ENCODE measurements at regions of chr9 and their contacts with region 1.

Region 1: DNA sequence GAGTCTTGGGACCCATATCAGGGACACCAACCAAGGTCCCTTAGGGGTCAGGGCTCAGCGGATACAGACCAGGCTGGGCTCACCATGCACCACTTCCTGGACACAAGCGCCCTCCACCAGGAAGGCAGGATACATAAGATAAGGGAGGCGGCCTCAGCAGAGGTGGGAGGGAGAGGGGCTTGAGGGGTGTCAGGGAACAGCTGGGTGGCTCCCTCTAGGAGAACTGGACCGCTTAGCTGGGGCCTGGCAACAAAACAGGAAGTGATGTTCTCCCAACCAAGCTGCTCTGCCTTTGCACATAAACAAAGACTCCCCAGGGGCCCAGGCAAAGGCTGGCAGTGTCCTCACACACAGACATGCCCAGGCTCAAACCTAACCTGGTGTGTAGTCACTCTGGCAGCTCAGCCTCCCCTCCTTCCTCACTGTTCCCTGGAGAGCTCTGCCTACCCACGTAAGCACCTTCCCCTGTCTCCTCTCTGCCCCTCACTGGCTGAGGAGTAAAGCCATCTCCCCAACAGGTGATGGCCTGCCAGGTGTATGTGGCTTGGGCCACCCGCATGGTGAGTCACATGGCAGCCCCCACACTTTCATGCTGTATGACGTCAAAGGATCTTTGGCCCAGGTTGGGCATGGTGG is 5.8 kb upstream of the BICD2 start:
- DNase-seq: no peak
- ATAC-seq: no peak
- H3K4me3 ChIP-seq: no peak overlapping the region
- H3K4me3 Mint-ChIP-seq: no peak overlapping the region
- H3K27ac ChIP-seq: no peak overlapping the region
- H3K27ac Mint-ChIP-seq: peak overlapping the region; percentile 69
- H3K4me1 ChIP-seq: peaks cover 17% of the 10 kb centered on the region
- H3K4me1 Mint-ChIP-seq: peaks cover 28% of the 10 kb centered on the region
- H3K27me3 ChIP-seq: peaks cover 0 to 2% of the 10 kb centered on the region in 2 experiments
- H3K27me3 Mint-ChIP-seq: peaks cover 5% of the 10 kb centered on the region
- CTCF ChIP-seq: no peak

Region 2: DNA sequence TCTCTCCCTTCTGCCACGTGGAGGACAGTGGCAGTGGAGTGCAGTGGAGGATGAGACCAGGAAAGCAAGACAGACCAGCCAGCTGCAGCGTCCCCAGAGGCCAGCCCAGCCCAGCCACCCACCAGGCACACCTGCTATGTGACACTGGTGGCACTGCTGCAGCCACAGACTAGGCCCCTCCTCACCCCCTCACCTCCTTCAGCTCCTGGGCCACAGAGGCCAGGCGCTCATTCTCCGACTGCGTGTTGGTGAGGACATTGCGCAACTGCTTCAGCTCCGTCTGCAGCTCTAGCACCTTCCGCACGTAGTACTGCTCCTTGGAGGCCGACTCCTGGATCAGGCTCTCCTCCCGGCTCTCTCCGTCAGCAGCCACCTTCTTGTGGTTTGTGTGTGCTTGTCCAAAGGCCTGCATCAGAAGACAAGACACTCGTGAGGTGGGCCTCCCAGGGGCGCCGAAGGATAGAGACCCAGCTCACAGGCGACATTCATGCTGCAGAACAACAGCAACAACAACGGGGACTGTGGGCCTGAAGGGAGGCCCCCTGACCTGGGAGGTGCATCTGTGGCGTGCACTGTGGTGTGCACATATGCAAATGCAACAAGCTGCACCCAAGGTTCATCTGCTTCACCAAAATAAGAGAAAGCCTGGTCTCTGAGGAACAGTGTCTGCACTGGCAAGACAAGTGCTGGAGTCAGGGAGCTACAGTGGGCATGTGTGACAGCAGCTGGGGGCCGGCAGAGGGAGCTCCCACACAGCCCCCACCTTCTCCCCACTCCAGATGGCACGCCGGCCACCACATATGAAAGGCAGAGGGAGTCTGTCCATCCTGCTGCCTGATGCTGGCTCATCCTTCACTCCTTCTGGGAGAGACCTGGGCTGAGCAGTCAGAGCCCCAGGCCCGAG is 41.4 kb before region 1 on chr9:
- CTCF ChIA-PET with region 1: no interaction called
- POLR2A ChIA-PET with region 1: no interaction called
- intact Hi-C with region 1: loop called in 1 of 2 experiments (anchors 5 kb)
- DNase-seq: peak in 1 of 9 experiments; percentile 44
- ATAC-seq: no peak
- H3K4me3 ChIP-seq: no peak overlapping the region
- H3K4me3 Mint-ChIP-seq: no peak overlapping the region
- H3K27ac ChIP-seq: no peak overlapping the region
- H3K27ac Mint-ChIP-seq: no peak overlapping the region
- H3K4me1 ChIP-seq: no peaks in the 10 kb centered on the region
- H3K4me1 Mint-ChIP-seq: peaks cover 33% of the 10 kb centered on the region
- H3K27me3 ChIP-seq: no peaks in the 10 kb centered on the region
- H3K27me3 Mint-ChIP-seq: no peaks in the 10 kb centered on the region
- CTCF ChIP-seq: no peak

Region 3: DNA sequence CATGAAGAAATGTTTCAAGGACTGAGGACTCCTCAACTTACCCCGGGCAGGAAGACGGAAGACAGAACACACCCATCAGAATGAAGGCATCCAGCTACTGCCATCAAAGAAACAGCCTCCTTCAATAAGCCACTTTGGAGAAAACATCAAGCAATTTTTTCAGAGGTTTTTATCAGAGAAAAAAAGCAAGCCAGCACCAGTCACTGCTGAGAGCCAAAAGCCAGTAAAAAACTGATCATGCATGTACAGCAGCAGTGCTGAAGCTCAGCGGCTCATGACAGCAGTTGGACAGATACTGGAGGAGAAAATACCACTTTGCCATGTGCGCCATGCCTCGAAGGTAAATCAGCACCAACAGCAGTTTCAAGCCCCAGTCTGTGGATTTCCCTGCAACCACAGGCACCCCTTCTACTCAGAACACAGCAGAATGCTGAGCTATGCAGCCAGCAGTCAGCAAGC is 117.4 kb after region 1 on chr9:
- CTCF ChIA-PET with region 1: no interaction called
- POLR2A ChIA-PET with region 1: no interaction called
- intact Hi-C with region 1: no loop called
- DNase-seq: peak in 4 of 9 experiments; percentile 37 to 70 (median 48)
- ATAC-seq: peak; percentile 66
- H3K4me3 ChIP-seq: no peak overlapping the region
- H3K4me3 Mint-ChIP-seq: peak overlapping the region; percentile 67
- H3K27ac ChIP-seq: peak overlapping the region in 1 of 2 experiments; percentile 24
- H3K27ac Mint-ChIP-seq: peak overlapping the region; percentile 83
- H3K4me1 ChIP-seq: peaks cover 30% of the 10 kb centered on the region
- H3K4me1 Mint-ChIP-seq: peaks cover 47% of the 10 kb centered on the region
- H3K27me3 ChIP-seq: no peaks in the 10 kb centered on the region
- H3K27me3 Mint-ChIP-seq: no peaks in the 10 kb centered on the region
- CTCF ChIP-seq: no peak

Measured in CD8-positive, alpha-beta T cell (primary cell).